ENCODE measurements at regions of chr20 and their contacts with region 1.

Region 1: DNA sequence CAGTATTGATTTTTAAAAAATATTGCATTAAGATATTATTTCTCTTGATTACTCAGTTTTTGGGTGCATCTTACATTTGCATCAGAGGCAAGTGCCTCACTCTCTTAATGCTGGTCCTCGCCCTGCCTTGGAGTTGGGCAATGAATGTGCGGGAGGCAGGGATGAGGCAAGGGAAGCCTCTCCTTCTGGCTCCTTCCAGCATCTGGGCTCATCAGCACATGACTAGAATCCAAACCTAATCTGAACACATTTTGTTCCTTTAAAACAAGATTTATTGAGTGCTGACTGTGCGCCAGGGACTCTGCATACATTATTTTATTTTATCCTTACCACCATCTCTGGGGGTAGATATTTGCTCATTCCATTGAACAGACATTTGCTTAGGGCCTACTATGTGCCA is 71.8 kb upstream of the ZNFX1 start:
- DNase-seq: no peak

Region 2: DNA sequence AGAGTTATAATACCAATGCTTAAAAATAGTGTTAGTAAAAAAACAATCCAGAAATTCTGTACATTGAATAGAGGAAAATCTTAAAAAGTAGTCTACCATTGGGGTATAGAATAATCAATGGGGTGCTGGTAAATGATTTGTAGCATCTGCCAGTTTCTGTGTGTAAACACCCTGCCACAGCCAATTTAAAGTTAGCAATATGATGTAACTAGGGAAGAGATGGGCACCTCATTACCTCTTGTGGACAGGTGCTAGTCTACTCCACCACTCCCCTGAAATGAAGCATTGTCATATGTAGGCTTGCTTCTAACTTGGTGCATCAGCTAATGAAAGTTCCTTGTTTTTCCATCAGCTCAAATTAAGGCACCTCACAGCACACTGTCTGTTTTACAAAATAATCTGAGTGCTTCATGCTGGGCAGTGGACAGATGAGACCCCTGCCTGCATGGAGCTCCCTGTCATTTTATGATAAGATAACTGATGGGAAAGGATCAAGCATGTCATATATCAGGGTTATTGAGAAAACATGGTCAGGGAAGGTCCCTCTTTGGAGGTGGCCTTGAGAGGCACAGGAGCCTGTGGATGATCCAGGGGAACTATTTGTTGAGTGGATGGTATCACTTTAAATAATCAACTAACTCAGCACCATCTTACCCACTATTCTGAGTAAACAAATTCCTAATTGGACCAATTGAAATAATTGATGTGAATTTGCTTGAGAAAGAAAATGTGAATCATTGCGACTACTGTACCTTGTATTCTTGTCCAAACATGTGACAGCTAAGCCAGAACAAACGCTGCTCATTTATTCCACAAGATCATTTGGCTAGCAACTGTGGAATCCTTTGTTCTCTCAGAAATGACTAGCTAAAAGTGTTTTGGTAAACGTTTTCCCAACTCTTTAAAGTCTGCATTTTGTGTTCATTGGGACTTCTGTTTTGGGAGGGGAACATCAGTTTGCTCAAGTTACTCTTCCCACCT is 349.5 kb before region 1 on chr20:
- intact Hi-C with region 1: no loop called
- DNase-seq: no peak

Region 3: GRCh38 chr20:49338061-49338460 is 11.6 kb before region 1 on chr20:
- intact Hi-C with region 1: no loop called
- DNase-seq: no peak

Region 4: GRCh38 chr20:49377326-49377725 is 27.6 kb after region 1 on chr20:
- intact Hi-C with region 1: loop called (anchors 2 kb)
- DNase-seq: no peak

Measured in cardiac septum (tissue), 1 donor.